ENCODE measurements at regions of chr1 and their contacts with region 1.

Region 1: GRCh38 chr1:46223472-46223943 is 20.4 kb downstream of the LURAP1 start:
- DNase-seq: peak; percentile 92
- H3K4me3 ChIP-seq: no peak overlapping the region
- H3K27ac ChIP-seq: no peak overlapping the region
- H3K4me1 ChIP-seq: peaks cover 17% of the 10 kb centered on the region
- H3K27me3 ChIP-seq: no peaks in the 10 kb centered on the region
- CTCF ChIP-seq: peak; percentile 91 to 98

Region 2: GRCh38 chr1:46030876-46031660 is 192.4 kb before region 1 on chr1:
- CTCF ChIA-PET with region 1: no interaction called
- dilution Hi-C with region 1: no loop called
- in situ Hi-C with region 1: loop called in 1 of 2 experiments (anchors 5 kb)
- intact Hi-C with region 1: loop called (anchors 2 kb)
- DNase-seq: no peak
- H3K4me3 ChIP-seq: no peak overlapping the region
- H3K27ac ChIP-seq: no peak overlapping the region
- H3K4me1 ChIP-seq: no peaks in the 10 kb centered on the region
- H3K27me3 ChIP-seq: no peaks in the 10 kb centered on the region
- CTCF ChIP-seq: no peak

Region 3: GRCh38 chr1:46036894-46037839 is 186.3 kb before region 1 on chr1:
- CTCF ChIA-PET with region 1: no interaction called
- dilution Hi-C with region 1: no loop called
- in situ Hi-C with region 1: loop called in 1 of 2 experiments (anchors 5 kb)
- intact Hi-C with region 1: loop called (anchors 2 kb)
- DNase-seq: peak; percentile 65
- H3K4me3 ChIP-seq: no peak overlapping the region
- H3K27ac ChIP-seq: no peak overlapping the region
- H3K4me1 ChIP-seq: peaks cover 8% of the 10 kb centered on the region
- H3K27me3 ChIP-seq: no peaks in the 10 kb centered on the region
- CTCF ChIP-seq: peak; percentile 96 to 98

Region 4: GRCh38 chr1:46247436-46248121 is 24.1 kb after region 1 on chr1 and contains the start of gene RAD54L:
- CTCF ChIA-PET with region 1: interaction called, 12 read pairs
- dilution Hi-C with region 1: no loop called
- in situ Hi-C with region 1: no loop called
- intact Hi-C with region 1: no loop called
- DNase-seq: peak; percentile 99
- H3K4me3 ChIP-seq: peak within 1 kb of the TSS; percentile 75 to 88 (median 81)
- H3K27ac ChIP-seq: peak within 1 kb of the TSS; percentile 73
- H3K4me1 ChIP-seq: peaks cover 16% of the 10 kb centered on the region
- H3K27me3 ChIP-seq: no peaks in the 10 kb centered on the region
- CTCF ChIP-seq: no peak
- total RNA-seq, gene RAD54L: 1.2 to 14.3 TPM

Region 5: GRCh38 chr1:46254668-46255067 is 31.2 kb after region 1 on chr1:
- CTCF ChIA-PET with region 1: no interaction called
- dilution Hi-C with region 1: loop called (anchors 5 kb)
- in situ Hi-C with region 1: no loop called
- intact Hi-C with region 1: no loop called
- DNase-seq: no peak
- H3K4me3 ChIP-seq: no peak overlapping the region
- H3K27ac ChIP-seq: no peak overlapping the region
- H3K4me1 ChIP-seq: no peaks in the 10 kb centered on the region
- H3K27me3 ChIP-seq: no peaks in the 10 kb centered on the region
- CTCF ChIP-seq: no peak

Measured in mammary epithelial cell (primary cell).